AG04450 (cell line): ENCODE measurements at regions of chr11 and their contacts with region 1.

Region 1: GRCh38 chr11:73787643-73788537 is at the start of gene MRPL48:
- DNase-seq: peak; percentile 84
- H3K4me3 ChIP-seq: peak within 1 kb of the TSS; percentile 93
- H3K27ac ChIP-seq: peak within 1 kb of the TSS; percentile 89
- H3K27me3 ChIP-seq: no peaks in the 10 kb centered on the region
- CTCF ChIP-seq: no peak
- polyA plus RNA-seq, gene MRPL48: 57.9 and 65.7 TPM in 2 replicates

Region 2: GRCh38 chr11:72352859-72353551 is 1434.9 kb before region 1 on chr11:
- CTCF ChIA-PET with region 1: no interaction called
- POLR2A ChIA-PET with region 1: interaction called, 14 read pairs
- DNase-seq: peak; percentile 67
- H3K4me3 ChIP-seq: no peak overlapping the region
- H3K27ac ChIP-seq: no peak overlapping the region
- H3K27me3 ChIP-seq: no peaks in the 10 kb centered on the region
- CTCF ChIP-seq: peak; percentile 79

Region 3: GRCh38 chr11:73760679-73761402 is 27.0 kb before region 1 on chr11 and contains the start of gene RAB6A:
- CTCF ChIA-PET with region 1: no interaction called
- POLR2A ChIA-PET with region 1: interaction called, 29 read pairs
- DNase-seq: peak; percentile 99
- H3K4me3 ChIP-seq: peak within 1 kb of the TSS; percentile 91
- H3K27ac ChIP-seq: peak within 1 kb of the TSS; percentile 91
- H3K27me3 ChIP-seq: peaks cover 2% of the 10 kb centered on the region
- CTCF ChIP-seq: peak; percentile 35; the same call in 1 of the 2 replicates
- polyA plus RNA-seq, gene RAB6A: 97.0 and 153 TPM in 2 replicates

Region 4: DNA sequence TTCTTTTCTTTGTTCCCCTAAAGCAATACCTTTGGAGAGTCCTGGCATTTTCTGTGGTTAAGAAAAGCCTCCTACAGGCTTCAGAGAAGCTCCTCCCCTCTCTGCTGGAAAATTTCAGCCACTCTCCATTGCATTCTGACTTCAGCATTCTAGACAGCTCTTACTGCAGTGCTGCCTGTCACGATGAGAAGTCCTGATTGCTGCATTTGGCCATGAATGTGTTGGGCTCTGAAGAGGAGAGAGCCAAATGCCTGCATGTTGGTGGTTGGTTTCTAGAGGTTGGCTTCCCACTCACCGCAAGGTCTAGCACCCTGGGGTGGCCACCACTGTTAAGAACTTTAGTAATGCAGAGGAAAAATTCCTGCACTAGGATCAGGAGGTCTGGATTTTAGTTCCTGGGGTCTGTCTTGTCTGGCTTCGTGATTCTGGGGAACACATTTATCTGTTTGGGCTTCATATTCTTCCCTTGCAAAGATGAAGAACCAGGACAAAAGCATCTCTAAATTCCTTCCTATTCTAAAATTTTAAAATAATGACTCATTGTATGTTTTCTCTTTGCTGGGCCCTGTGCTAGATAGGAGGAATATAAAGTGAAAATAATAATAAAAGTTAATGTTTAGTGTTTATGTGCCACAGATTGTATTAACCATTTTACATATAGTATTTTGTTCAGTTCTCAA is 50.7 kb after region 1 on chr11:
- CTCF ChIA-PET with region 1: no interaction called
- POLR2A ChIA-PET with region 1: interaction called, 11 read pairs
- DNase-seq: no peak
- H3K4me3 ChIP-seq: no peak overlapping the region
- H3K27ac ChIP-seq: peak overlapping the region; percentile 21
- H3K27me3 ChIP-seq: no peaks in the 10 kb centered on the region
- CTCF ChIP-seq: no peak

Region 5: GRCh38 chr11:73939096-73939495 is 151.2 kb after region 1 on chr11:
- CTCF ChIA-PET with region 1: no interaction called
- POLR2A ChIA-PET with region 1: no interaction called
- DNase-seq: no peak
- H3K4me3 ChIP-seq: no peak overlapping the region
- H3K27ac ChIP-seq: no peak overlapping the region
- H3K27me3 ChIP-seq: no peaks in the 10 kb centered on the region
- CTCF ChIP-seq: no peak